GM23248 (cell line): ENCODE measurements at regions of chr2 and their contacts with region 1.

Region 1: GRCh38 chr2:176126929-176127773 is 2.4 kb upstream of the HOXD8 start:
- DNase-seq: peak; percentile 80
- H3K4me3 ChIP-seq: peak overlapping the region; percentile 90
- H3K27ac ChIP-seq: peak overlapping the region; percentile 97
- H3K4me1 ChIP-seq: peaks cover 20% of the 10 kb centered on the region
- H3K27me3 ChIP-seq: no peaks in the 10 kb centered on the region

Region 2: DNA sequence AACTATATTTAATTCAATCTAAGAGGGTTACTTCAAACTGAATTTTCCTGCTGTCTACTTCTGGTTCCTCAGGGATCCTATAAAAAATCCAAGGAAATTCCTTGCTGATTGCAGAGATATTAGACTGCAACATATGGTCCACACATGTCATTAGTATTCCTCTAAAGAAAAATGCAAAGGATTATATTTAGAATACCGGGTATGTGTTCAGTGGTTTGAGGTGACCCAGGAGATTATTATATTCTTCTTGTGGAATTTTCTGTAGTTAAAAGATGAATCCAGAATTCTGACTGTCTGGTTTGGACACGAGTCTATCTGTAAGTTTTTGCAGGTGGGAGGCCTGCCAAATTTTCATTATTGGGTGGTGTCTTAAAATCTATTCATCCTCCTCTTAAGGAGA is 79.5 kb after region 1 on chr2:
- in situ Hi-C with region 1: no loop called
- DNase-seq: peak; percentile 5
- H3K4me3 ChIP-seq: no peak overlapping the region
- H3K27ac ChIP-seq: no peak overlapping the region
- H3K4me1 ChIP-seq: no peaks in the 10 kb centered on the region
- H3K27me3 ChIP-seq: no peaks in the 10 kb centered on the region

Region 3: GRCh38 chr2:176638167-176639015 is 511.2 kb after region 1 on chr2:
- in situ Hi-C with region 1: loop called (anchors 5 kb)
- DNase-seq: peak; percentile 91
- H3K4me3 ChIP-seq: peak overlapping the region; percentile 96
- H3K27ac ChIP-seq: peak overlapping the region; percentile 94
- H3K4me1 ChIP-seq: peaks cover 62% of the 10 kb centered on the region
- H3K27me3 ChIP-seq: no peaks in the 10 kb centered on the region

Region 4: DNA sequence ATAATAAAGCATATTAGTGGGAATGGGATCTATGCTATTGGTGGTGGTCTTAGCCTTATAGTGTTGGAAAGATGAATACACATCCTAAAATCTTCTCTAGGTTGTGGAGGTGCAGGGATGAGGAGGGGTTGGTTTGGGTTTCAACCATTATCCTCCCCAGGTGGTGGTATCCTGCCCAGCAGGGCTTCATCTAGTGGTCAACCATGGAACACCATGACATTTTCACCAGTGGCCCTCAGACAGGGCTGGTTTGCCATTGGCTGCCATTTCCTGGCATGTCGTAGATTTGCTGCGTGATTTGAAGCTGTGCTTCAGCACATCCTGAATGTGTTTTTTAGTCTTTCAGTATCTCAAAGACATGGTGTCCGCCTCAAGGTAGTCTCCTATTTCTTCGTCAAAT is 694.2 kb after region 1 on chr2:
- in situ Hi-C with region 1: loop called (anchors 10 kb)
- DNase-seq: no peak
- H3K4me3 ChIP-seq: no peak overlapping the region
- H3K27ac ChIP-seq: no peak overlapping the region
- H3K4me1 ChIP-seq: no peaks in the 10 kb centered on the region
- H3K27me3 ChIP-seq: peaks cover 13% of the 10 kb centered on the region

Region 5: GRCh38 chr2:177148477-177149154 is 1021.5 kb after region 1 on chr2:
- in situ Hi-C with region 1: loop called (anchors 5 kb)
- DNase-seq: peak; percentile 88
- H3K4me3 ChIP-seq: peak overlapping the region; percentile 87
- H3K27ac ChIP-seq: no peak overlapping the region
- H3K4me1 ChIP-seq: peaks cover 4% of the 10 kb centered on the region; the same call in 1 of the 2 replicates
- H3K27me3 ChIP-seq: no peaks in the 10 kb centered on the region